Right ventricle myocardium inferior (tissue), 1 donor: ENCODE measurements at regions of chr4 and their contacts with region 1.

Region 1: DNA sequence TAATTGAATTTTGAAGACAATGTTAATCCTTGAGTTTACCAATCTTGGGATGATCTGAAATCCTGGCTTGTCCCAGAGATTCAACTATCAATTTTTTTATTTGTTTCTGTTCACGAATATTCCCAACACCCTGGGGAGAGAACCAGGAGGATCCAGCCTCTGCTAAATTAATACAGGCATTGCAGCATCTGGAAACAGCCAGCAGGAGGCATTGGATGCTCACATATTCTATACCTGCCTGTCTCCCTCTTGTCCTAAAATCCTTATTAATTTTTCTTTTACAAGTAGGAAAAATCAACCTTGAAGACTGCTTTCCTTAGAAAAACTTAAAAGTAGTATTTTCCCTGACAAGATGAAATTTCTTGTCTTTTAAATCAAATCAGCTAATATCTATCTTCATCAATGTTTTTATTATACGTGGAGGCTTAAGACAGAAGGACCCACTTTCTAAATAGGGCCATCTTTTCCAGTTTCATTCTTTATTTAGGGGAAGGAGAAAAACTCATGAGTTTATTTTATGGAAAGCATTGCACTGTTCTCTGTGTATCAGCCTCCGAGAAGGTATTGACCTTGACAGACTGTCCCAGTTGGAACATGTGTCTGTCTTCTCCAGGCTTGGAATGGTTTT is 102.4 kb downstream of the CLNK start:
- DNase-seq: no peak
- ATAC-seq: no peak

Region 2: DNA sequence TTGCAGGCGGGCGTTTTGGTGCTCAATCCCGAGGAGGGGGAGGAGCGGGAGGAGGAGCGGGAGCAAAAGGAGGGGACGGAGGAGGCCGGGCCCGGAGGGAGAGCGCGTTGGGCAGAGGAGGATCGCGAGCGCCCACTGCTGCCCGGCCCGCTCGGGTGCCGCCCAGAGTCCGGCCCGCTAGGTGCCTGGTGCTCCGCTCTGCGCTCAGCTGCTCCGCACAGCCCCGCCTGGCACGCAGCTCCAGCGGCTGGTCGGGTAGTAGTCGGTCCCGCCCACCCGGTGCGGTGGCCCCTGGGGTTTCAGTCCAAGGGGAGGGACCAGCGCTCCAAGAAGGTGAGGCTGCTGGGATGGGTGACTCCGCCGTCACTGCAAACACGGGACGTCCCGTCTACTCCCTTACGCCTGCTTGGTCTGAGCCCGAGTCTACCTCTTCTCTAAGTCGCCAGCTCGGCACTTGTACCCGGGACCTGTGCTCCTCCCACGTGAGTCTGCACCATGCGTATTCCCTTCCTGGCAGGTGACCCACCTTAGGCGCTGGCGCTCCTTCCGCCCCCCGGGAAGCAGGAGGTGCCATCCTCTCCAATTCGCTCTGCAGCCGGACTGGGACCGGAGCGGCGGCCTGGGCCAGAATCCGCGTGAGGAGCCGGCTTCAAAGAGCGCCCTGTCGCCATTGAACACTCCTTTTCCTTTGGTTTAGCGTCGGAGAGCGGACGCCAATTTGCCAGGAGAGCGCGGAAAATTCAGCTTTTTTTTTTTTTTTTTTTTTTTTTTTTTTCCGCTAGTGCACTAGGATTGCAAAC is 846.9 kb after region 1 on chr4:
- intact Hi-C with region 1: loop called (anchors 5 kb)
- DNase-seq: peak; percentile 89
- ATAC-seq: peak; percentile 96

Region 3: GRCh38 chr4:11710453-11711093 is 1128.4 kb after region 1 on chr4:
- intact Hi-C with region 1: loop called (anchors 10 kb)
- DNase-seq: no peak
- ATAC-seq: no peak